Panc1 (cell line): ENCODE measurements at regions of chr20 and their contacts with region 1.

Region 1: GRCh38 chr20:3115190-3116107 is 30.9 kb upstream of the AVP start:
- DNase-seq: no peak
- ATAC-seq: peak; percentile 70
- H3K4me3 ChIP-seq: no peak overlapping the region
- H3K27ac ChIP-seq: no peak overlapping the region
- H3K4me1 ChIP-seq: no peaks in the 10 kb centered on the region; the same call in 1 of the 2 replicates
- H3K27me3 ChIP-seq: no peaks in the 10 kb centered on the region
- CTCF ChIP-seq: peak; percentile 91

Region 2: GRCh38 chr20:3068986-3069900 is 46.2 kb before region 1 on chr20:
- CTCF ChIA-PET with region 1: no interaction called
- POLR2A ChIA-PET with region 1: no interaction called
- in situ Hi-C with region 1: no loop called
- intact Hi-C with region 1: loop called (anchors 5 kb)
- DNase-seq: no peak
- ATAC-seq: peak; percentile 83
- H3K4me3 ChIP-seq: no peak overlapping the region
- H3K27ac ChIP-seq: no peak overlapping the region
- H3K4me1 ChIP-seq: 0 out of 2 replicates have a peak, but pooled peaks cover 3% of the 10 kb centered on the region
- H3K27me3 ChIP-seq: no peaks in the 10 kb centered on the region
- CTCF ChIP-seq: no peak; the same call in 1 of the 2 replicates

Region 3: GRCh38 chr20:3092611-3093379 is 22.7 kb before region 1 on chr20:
- CTCF ChIA-PET with region 1: no interaction called
- POLR2A ChIA-PET with region 1: no interaction called
- in situ Hi-C with region 1: no loop called
- intact Hi-C with region 1: loop called (anchors 1 kb)
- DNase-seq: no peak
- ATAC-seq: no peak
- H3K4me3 ChIP-seq: no peak overlapping the region
- H3K27ac ChIP-seq: no peak overlapping the region
- H3K4me1 ChIP-seq: no peaks in the 10 kb centered on the region
- H3K27me3 ChIP-seq: no peaks in the 10 kb centered on the region
- CTCF ChIP-seq: no peak